ENCODE measurements at regions of chrX and their contacts with region 1.

Region 1: DNA sequence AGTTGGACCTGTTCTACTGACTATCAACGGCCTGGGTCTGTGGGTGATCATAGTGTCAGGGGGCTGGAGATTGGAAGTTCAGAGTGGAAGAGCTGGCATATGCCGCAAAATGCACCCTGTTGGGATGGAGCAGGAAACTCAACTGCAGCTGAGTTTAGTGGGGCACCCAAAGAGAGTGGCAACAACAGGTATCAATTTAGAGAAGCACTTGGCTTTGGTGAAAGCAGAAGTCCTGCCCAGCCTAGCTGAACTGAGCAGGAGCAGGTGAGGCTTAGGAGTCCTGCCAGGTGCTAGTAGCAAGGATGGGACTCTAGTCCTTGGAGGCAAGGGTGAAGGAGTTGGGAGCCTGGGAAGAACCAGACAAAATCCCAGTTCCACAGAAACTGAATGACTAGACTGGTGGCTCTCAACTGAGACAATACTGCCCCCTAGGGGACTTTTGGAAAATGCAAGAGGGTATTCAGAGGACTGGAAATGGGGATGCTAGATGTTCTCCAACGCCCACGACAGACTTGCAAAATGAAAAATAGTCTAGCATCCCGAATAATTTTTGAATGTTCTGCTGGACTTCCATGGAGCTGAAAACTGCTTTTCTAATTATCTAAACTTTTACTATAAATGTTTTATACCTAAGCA is 49.4 kb downstream of the RTL9 start:
- DNase-seq: peak; percentile 50
- H3K4me3 ChIP-seq: no peak overlapping the region
- H3K27ac ChIP-seq: no peak overlapping the region
- H3K4me1 ChIP-seq: no peaks in the 10 kb centered on the region; a peak in 1 of 4 replicates
- H3K27me3 ChIP-seq: no peaks in the 10 kb centered on the region
- CTCF ChIP-seq: peak; percentile 79
- EP300 ChIP-seq: no peak
- RAD21 ChIP-seq: peak; percentile 86

Region 2: GRCh38 chrX:110394671-110395070 is 13.4 kb before region 1 on chrX:
- CTCF ChIA-PET with region 1: interaction called, 15 read pairs
- POLR2A ChIA-PET with region 1: no interaction called
- DNase-seq: no peak
- H3K4me3 ChIP-seq: no peak overlapping the region
- H3K27ac ChIP-seq: no peak overlapping the region
- H3K4me1 ChIP-seq: 0 out of 4 replicates have a peak, but pooled peaks cover 0 to 10% of the 10 kb centered on the region in 2 experiments
- H3K27me3 ChIP-seq: no peaks in the 10 kb centered on the region; the same call in 1 of the 2 replicates
- CTCF ChIP-seq: no peak
- EP300 ChIP-seq: 0 out of 4 replicates have a peak, but pooled peaks of 1 of the 2 experiments have one; percentile 16
- RAD21 ChIP-seq: no peak

Region 3: GRCh38 chrX:110418316-110419235 is 10.5 kb after region 1 on chrX:
- CTCF ChIA-PET with region 1: interaction called, 13 read pairs
- POLR2A ChIA-PET with region 1: no interaction called
- DNase-seq: peak; percentile 22
- H3K4me3 ChIP-seq: no peak overlapping the region
- H3K27ac ChIP-seq: no peak overlapping the region; a peak in 1 of 4 replicates
- H3K4me1 ChIP-seq: peaks cover 0 to 11% of the 10 kb centered on the region in 2 experiments; a peak in 1 of 4 replicates
- H3K27me3 ChIP-seq: no peaks in the 10 kb centered on the region; the same call in 1 of the 2 replicates
- CTCF ChIP-seq: peak; percentile 55
- EP300 ChIP-seq: no peak
- RAD21 ChIP-seq: peak; percentile 36

Measured in SK-N-SH (cell line).